ENCODE measurements at regions of chr4 and their contacts with region 1.

Region 1: GRCh38 chr4:89434364-89434988 is 126.9 kb upstream of the GPRIN3 start:
- DNase-seq: peak in 1 of 10 donors; percentile 3
- H3K4me3 ChIP-seq: no peak overlapping the region
- H3K27ac ChIP-seq: no peak overlapping the region
- H3K27me3 ChIP-seq: peaks cover 0 to 3% (median 0%) of the 10 kb centered on the region in 45 donors
- CTCF ChIP-seq: peak; percentile 51 to 91 (median 83)

Region 2: DNA sequence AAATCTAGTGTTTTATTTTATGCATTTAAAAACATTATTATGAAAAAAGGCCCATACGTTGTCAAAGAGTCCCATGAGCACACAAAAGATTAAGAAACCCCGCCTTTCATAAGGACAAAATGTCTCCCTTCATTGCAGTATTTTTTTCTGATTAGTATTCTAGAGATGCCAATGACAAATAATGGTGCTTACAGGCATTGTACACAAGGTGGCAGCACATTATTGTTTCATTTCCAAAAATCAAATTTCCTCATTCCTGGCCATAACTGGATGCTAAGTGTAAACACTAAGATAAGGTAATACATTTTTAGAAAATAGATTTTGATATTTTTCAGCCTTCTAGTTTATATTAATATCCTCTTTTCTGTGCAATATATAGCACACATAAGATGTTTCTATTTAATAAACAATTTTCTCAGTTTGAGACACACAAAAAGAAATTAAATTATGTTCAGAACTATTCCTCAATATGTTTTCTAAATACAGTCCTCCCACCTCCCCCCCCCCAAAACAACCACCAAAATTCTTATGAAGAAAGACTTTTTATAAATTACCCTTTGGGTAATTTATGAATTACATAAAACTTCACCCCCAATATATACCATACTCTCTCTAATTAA is 275.5 kb before region 1 on chr4:
- intact Hi-C with region 1: loop called (anchors 2 to 5 kb)
- DNase-seq: peak in 1 of 10 donors; percentile 17
- H3K4me3 ChIP-seq: peak overlapping the region in 36 of 59 donors; percentile 2 to 50 (median 26)
- H3K27ac ChIP-seq: no peak overlapping the region
- H3K27me3 ChIP-seq: no peaks in the 10 kb centered on the region
- CTCF ChIP-seq: peak; percentile 59 to 99 (median 83)

Region 3: DNA sequence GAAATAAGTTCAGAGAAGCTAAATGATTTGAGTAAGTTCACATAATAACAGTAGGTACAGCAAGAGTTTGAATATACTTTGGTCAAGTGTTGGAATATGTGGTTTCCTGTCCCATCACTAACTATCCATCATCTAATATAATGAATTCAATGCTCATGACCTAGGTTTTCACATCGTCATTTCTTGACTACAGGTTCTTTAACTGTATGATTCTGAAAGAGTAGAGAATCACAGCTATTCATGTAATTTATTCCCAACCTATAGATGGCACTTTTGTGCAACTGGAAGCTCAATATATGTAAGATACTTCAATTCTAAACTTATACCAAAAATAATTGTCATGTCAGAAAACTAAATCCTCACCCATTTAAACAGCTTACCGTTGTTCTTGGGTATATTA is 270.1 kb before region 1 on chr4:
- intact Hi-C with region 1: loop called (anchors 2 to 5 kb)
- DNase-seq: no peak
- H3K4me3 ChIP-seq: no peak overlapping the region
- H3K27ac ChIP-seq: no peak overlapping the region
- H3K27me3 ChIP-seq: peaks cover 0 to 7% (median 0%) of the 10 kb centered on the region in 45 donors
- CTCF ChIP-seq: no peak

Region 4: GRCh38 chr4:89226665-89227574 is 207.6 kb before region 1 on chr4:
- intact Hi-C with region 1: loop called (anchors 2 kb)
- DNase-seq: peak; percentile 36 to 86 (median 76)
- H3K4me3 ChIP-seq: peak overlapping the region in 6 of 59 donors; percentile 2 to 22 (median 18)
- H3K27ac ChIP-seq: no peak overlapping the region
- H3K27me3 ChIP-seq: no peaks in the 10 kb centered on the region
- CTCF ChIP-seq: peak; percentile 50 to 91 (median 82)